ENCODE measurements at regions of chr6 and their contacts with region 1.

Region 1: DNA sequence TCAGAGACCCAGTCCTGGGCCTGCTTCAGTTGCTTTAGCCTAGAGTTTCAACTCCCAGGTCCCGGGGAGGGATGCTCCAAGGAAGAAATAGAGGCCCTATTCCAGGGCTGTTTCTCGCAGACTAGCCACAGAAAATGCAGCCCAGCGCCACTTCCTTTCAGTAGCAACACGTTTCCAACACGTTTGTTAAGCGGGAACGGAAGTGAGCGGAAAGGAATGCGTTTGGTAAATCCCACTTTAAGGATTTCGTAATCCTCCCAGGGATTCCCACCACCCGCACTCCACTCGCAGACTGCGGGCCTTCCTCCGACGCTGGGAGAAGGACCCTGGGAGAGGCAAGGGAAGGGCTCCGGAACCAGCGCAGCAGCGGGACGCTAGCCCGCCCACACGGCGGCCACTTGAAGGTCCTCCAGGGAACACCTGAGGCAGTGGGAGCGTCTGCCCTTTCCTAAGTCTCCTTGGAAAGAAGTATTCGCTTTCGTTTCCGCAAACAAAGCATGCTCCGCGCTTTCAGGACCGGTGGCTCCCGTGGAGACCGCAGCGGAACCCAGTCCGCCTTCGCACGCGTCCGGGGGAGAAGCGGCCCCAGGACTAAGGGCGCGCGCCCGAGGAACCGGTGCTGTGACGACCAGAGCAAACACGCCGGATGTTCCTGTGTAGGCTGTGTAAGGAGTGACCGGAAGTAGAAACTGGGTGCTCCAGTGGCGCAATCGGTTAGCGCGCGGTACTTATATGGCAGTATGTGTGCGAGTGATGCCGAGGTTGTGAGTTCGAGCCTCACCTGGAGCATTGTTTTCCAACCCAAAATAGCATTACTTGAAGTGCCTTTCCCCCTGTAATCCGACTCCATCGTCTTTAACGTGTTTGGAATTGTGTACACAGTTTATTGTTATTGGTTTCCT is 227.6 kb upstream of the PRSS16 start:
- DNase-seq: peak; percentile 96

Region 2: DNA sequence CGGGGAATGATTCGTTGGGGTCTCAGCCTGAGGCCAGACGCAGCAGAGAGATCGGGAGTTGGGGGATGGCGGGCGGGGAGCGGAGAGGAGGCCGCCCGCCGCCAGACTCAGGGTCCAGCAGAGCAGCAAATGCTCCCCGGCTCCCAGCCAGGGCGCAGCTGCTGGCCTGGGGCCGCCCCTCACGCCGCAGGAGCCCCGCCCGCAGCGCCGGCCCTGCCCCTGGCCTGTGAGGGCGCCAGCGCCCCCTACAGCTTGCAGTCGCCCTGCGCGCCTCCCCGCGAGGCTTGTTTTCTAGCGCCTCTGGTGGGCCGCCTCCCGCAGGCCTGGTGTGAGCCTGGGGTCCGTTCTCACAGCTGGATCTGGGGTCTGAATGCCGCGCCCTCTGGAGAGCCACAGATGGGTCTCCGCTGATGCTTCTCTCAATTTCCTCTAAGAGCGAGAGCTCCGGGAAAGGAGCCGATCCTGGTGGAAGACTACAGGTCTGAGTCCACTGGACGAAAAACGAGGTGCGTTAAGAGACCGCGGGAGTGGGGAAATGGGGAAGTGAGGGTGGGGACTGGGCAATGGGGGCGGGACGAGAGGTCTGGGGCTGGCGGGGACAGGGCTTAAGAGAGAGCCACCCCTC is 1027.4 kb before region 1 on chr6:
- intact Hi-C with region 1: no loop called
- DNase-seq: peak; percentile 99

Region 3: GRCh38 chr6:28589957-28590349 is 1570.1 kb after region 1 on chr6:
- intact Hi-C with region 1: loop called in 1 of 2 experiments (anchors 5 kb)
- DNase-seq: no peak

Measured in posterior vena cava (tissue), 2 donors.